CD8-positive, alpha-beta T cell (primary cell): ENCODE measurements at regions of chr1 and their contacts with region 1.

Region 1: DNA sequence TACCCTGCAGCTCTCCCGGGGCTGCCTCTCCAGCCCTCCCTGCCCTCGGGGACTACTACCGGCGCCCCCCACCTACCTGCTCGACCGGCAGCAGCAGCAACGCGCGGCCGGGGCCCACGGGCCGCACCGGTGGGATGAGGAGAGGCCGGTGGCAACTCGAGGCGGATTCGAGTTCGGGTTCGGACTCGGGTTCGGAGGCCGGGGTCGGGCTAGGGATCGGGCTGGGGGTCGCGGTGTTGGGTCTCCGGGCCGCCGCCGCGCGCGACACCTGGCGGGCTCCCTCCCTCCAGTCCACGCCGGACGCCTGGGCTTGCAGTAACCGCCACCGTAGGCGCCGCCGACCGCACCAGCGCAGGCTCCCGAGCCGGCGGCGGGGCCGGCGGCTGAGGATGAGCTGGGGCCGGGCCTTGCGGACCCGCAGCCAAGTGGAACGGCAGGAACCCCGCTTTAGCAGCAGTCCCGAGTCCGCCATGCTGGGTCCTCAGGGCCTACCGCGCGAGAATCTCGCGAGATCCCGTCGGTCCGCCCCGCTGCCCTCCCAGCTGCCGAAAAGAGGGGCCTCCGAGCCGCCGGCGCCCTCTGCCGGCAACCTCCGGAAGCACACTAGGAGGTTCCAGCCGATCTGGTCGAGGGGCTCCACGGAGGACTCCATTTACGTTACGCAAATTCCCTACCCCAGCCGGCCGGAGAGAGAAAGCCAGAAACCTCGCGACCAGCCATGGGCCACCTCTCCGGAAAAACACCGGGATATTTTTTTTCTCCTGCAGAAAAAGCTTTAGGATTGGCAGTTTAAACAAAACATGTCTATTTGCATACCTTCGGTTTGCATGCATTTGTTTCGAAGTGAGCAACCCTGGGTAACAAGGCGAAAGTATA is at the start of gene NOL9:
- DNase-seq: peak; percentile 91 to 98 (median 94)
- ATAC-seq: peak; percentile 99
- H3K4me3 ChIP-seq: peak within 1 kb of the TSS; percentile 91 to 92
- H3K4me3 Mint-ChIP-seq: peak within 1 kb of the TSS; percentile 77
- H3K27ac ChIP-seq: peak within 1 kb of the TSS; percentile 43 to 81
- H3K27ac Mint-ChIP-seq: peak within 1 kb of the TSS; percentile 75
- H3K4me1 ChIP-seq: peaks cover 20% of the 10 kb centered on the region
- H3K4me1 Mint-ChIP-seq: peaks cover 15% of the 10 kb centered on the region
- H3K27me3 ChIP-seq: no peaks in the 10 kb centered on the region
- H3K27me3 Mint-ChIP-seq: no peaks in the 10 kb centered on the region
- CTCF ChIP-seq: peak; percentile 88
- total RNA-seq, gene NOL9: 67.9 to 71.8 TPM

Region 2: DNA sequence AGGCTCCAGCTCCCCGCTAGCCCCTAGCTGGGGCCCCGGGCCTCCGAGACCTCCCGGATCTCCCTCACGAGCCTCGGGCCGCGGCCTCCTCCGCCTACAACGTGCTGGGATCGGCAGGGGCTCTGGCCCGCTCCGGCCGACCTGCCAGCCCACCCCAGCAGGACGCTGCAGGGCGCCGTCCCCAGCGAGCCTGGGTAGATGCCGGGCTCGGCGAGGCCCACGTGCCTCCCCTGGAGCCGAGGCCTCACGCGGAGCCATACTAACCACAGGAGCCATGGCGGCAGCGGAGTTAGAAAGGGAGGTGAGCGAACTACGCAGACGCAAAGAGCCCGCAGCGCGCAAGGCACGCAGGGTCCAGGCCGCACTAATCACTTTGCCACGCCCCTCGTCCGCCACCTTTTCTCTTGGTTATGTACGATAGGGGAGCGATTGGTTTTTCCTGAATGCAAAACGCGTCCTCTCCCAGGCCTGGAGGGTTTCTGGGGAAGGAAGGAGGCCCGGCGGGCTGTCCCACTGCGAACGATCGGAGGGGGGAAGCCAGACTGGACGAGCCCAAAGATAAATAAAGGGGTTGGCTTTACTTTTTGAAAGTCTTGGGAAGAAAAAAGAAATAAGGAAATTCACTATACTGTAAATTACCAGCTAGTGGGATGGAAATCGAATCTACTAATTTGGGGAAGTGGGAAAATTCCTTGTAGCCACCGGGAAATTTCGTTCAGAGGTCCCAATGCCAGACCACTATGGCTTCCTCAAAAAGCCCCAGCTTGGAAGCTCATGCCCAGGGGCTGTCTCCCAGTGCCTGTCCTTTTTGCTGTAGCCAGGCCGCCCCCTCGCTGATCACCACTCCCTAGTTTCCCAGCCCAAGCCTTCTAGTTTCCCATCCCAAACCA is 354.7 kb before region 1 on chr1 and contains the start of gene RPL22:
- CTCF ChIA-PET with region 1: no interaction called
- POLR2A ChIA-PET with region 1: no interaction called
- intact Hi-C with region 1: loop called in 1 of 2 experiments (anchors 10 kb)
- DNase-seq: peak; percentile 93 to 99 (median 97)
- ATAC-seq: peak; percentile 97
- H3K4me3 ChIP-seq: peak within 1 kb of the TSS; percentile 83 to 97
- H3K4me3 Mint-ChIP-seq: peak within 1 kb of the TSS; percentile 84
- H3K27ac ChIP-seq: peak within 1 kb of the TSS; percentile 68 to 82
- H3K27ac Mint-ChIP-seq: peak within 1 kb of the TSS; percentile 92
- H3K4me1 ChIP-seq: peaks cover 24% of the 10 kb centered on the region
- H3K4me1 Mint-ChIP-seq: peaks cover 42% of the 10 kb centered on the region
- H3K27me3 ChIP-seq: no peaks in the 10 kb centered on the region
- H3K27me3 Mint-ChIP-seq: no peaks in the 10 kb centered on the region
- CTCF ChIP-seq: no peak
- total RNA-seq, gene RPL22: 565 to 567 TPM

Region 3: DNA sequence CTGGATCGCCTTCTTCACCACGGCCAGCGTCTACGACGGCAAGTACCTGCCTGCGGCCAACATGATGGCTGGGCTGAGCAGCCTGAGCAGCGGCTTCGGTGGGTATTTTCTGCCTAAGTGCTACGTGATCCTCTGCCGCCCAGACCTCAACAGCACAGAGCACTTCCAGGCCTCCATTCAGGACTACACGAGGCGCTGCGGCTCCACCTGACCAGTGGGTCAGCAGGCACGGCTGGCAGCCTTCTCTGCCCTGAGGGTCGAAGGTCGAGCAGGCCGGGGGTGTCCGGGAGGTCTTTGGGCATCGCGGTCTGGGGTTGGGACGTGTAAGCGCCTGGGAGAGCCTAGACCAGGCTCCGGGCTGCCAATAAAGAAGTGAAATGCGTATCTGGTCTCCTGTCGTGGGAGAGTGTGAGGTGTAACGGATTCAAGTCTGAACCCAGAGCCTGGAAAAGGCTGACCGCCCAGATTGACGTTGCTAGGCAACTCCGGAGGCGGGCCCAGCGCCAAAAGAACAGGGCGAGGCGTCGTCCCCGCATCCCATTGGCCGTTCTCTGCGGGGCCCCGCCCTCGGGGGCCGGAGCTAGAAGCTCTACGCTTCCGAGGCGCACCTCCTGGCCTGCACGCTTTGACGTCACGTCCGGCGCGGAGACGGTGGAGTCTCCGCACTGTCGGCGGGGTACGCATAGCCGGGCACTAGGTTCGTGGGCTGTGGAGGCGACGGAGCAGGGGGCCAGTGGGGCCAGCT is 25.3 kb after region 1 on chr1 and contains the start of gene ZBTB48:
- CTCF ChIA-PET with region 1: interaction called, 17 read pairs
- POLR2A ChIA-PET with region 1: interaction called, 4 read pairs
- intact Hi-C with region 1: loop called (anchors 1 kb)
- DNase-seq: peak; percentile 91 to 98 (median 97)
- ATAC-seq: peak; percentile 98
- H3K4me3 ChIP-seq: peak within 1 kb of the TSS; percentile 90 to 97
- H3K4me3 Mint-ChIP-seq: peak within 1 kb of the TSS; percentile 97
- H3K27ac ChIP-seq: peak within 1 kb of the TSS; percentile 94
- H3K27ac Mint-ChIP-seq: peak within 1 kb of the TSS; percentile 98
- H3K4me1 ChIP-seq: peaks cover 31% of the 10 kb centered on the region
- H3K4me1 Mint-ChIP-seq: peaks cover 38% of the 10 kb centered on the region
- H3K27me3 ChIP-seq: no peaks in the 10 kb centered on the region
- H3K27me3 Mint-ChIP-seq: no peaks in the 10 kb centered on the region
- CTCF ChIP-seq: no peak
- total RNA-seq, gene ZBTB48: 31.9 to 35.0 TPM

Region 4: DNA sequence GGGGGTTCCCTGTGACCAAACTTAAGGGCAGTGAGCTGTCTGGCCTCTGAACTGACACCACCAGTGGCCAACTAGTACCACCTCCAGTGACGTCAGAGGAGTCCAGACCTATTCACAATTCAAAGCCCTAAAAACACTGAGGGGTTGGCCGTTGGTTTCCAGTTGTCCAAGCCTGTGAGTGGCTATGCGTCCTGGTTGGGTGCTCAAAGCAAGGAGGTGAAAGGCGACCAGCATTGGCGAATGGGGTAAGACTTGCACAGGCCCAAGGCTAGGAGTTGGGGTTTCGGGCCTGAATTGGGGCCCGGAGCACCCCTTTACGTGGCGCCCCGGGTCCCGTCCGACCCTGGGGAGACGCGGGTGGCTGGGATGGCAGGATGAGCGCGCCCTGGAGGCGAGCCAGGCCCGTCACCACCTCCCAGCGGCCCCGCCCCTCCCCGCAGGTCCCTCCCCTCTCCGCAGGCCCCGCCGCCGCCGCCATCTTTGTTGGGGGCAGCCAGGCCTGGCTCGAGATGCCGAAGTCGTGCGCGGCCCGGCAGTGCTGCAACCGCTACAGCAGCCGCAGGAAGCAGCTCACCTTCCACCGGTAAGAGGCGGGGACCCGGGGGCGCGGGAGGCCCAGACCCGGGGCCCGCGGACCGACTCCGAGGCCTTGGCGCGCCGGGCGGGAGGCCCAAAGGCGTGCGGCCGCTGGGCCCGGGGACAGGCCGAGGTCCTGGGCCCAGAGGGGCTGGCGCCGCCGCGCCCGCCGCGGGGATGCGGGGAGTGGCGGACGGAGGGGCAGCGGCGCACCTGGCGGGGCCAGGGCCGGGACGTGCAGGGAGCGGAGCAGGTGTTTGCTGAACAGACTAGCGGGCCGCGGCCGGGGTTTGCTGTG is 70.7 kb after region 1 on chr1 and contains the start of gene THAP3:
- CTCF ChIA-PET with region 1: interaction called, 14 read pairs
- POLR2A ChIA-PET with region 1: no interaction called
- intact Hi-C with region 1: loop called (anchors 1 kb)
- DNase-seq: peak; percentile 78 to 94 (median 90)
- ATAC-seq: peak; percentile 99
- H3K4me3 ChIP-seq: peak within 1 kb of the TSS; percentile 61 to 69
- H3K4me3 Mint-ChIP-seq: peak within 1 kb of the TSS; percentile 91
- H3K27ac ChIP-seq: peak within 1 kb of the TSS; percentile 47 to 55
- H3K27ac Mint-ChIP-seq: peak within 1 kb of the TSS; percentile 88
- H3K4me1 ChIP-seq: peaks cover 18% of the 10 kb centered on the region
- H3K4me1 Mint-ChIP-seq: peaks cover 30% of the 10 kb centered on the region
- H3K27me3 ChIP-seq: no peaks in the 10 kb centered on the region
- H3K27me3 Mint-ChIP-seq: no peaks in the 10 kb centered on the region
- CTCF ChIP-seq: peak; percentile 25
- total RNA-seq, gene THAP3: 13.9 to 14.4 TPM

Region 5: GRCh38 chr1:6646499-6647148 is 92.4 kb after region 1 on chr1:
- CTCF ChIA-PET with region 1: interaction called, 9 read pairs
- POLR2A ChIA-PET with region 1: interaction called, 3 read pairs
- intact Hi-C with region 1: loop called (anchors 1 kb)
- DNase-seq: peak in 6 of 9 experiments; percentile 8 to 69 (median 30)
- ATAC-seq: peak; percentile 74
- H3K4me3 ChIP-seq: no peak overlapping the region
- H3K4me3 Mint-ChIP-seq: no peak overlapping the region
- H3K27ac ChIP-seq: no peak overlapping the region
- H3K27ac Mint-ChIP-seq: no peak overlapping the region
- H3K4me1 ChIP-seq: no peaks in the 10 kb centered on the region
- H3K4me1 Mint-ChIP-seq: peaks cover 3% of the 10 kb centered on the region
- H3K27me3 ChIP-seq: no peaks in the 10 kb centered on the region
- H3K27me3 Mint-ChIP-seq: no peaks in the 10 kb centered on the region
- CTCF ChIP-seq: peak; percentile 64

Region 6: DNA sequence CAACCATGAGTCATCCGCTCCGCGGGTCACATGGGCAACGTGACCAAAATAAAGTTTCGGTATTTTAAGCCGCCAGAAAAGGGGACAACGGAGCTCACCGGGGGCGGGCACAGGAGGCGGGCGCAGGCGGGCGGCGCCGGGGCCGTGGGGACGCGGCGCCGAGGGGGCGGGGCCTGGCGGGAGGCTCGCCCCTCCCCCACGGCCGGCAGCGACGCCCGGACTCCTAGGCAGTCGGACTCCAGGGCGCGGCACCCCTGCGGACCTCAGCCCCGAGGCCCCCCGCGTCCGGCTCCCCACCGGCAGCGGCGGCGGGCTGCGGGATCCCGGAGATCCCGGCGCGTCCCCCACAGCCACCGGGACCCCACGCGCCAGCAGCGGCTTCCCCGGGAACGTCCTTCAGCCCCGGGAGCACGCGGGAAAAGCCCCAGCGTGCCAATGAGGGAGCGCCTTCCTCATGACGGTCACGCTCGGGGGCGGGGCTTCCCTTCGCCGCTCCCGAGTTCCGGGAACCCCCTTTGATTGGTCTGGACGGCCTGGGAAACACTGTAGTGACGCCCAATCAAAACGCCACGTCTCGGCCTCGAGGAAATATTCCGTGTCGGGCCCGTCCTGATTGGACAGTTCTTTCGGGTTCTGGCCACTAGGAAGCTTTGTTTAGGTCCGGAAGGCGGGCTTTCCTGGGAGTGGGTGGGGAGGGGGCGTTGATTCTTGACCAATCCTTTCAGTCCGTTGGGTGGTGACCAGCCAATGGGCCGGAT is 230.5 kb after region 1 on chr1:
- CTCF ChIA-PET with region 1: no interaction called
- POLR2A ChIA-PET with region 1: no interaction called
- intact Hi-C with region 1: loop called (anchors 1 to 2 kb)
- DNase-seq: peak; percentile 97 to 100 (median 99)
- ATAC-seq: peak; percentile 81
- H3K4me3 ChIP-seq: peak overlapping the region; percentile 80
- H3K4me3 Mint-ChIP-seq: peak overlapping the region; percentile 95
- H3K27ac ChIP-seq: peak overlapping the region; percentile 73 to 93
- H3K27ac Mint-ChIP-seq: peak overlapping the region; percentile 91
- H3K4me1 ChIP-seq: peaks cover 25% of the 10 kb centered on the region
- H3K4me1 Mint-ChIP-seq: peaks cover 44% of the 10 kb centered on the region
- H3K27me3 ChIP-seq: no peaks in the 10 kb centered on the region
- H3K27me3 Mint-ChIP-seq: no peaks in the 10 kb centered on the region
- CTCF ChIP-seq: no peak